A549 (cell line): ENCODE measurements at regions of chr22 and their contacts with region 1.

Region 1: DNA sequence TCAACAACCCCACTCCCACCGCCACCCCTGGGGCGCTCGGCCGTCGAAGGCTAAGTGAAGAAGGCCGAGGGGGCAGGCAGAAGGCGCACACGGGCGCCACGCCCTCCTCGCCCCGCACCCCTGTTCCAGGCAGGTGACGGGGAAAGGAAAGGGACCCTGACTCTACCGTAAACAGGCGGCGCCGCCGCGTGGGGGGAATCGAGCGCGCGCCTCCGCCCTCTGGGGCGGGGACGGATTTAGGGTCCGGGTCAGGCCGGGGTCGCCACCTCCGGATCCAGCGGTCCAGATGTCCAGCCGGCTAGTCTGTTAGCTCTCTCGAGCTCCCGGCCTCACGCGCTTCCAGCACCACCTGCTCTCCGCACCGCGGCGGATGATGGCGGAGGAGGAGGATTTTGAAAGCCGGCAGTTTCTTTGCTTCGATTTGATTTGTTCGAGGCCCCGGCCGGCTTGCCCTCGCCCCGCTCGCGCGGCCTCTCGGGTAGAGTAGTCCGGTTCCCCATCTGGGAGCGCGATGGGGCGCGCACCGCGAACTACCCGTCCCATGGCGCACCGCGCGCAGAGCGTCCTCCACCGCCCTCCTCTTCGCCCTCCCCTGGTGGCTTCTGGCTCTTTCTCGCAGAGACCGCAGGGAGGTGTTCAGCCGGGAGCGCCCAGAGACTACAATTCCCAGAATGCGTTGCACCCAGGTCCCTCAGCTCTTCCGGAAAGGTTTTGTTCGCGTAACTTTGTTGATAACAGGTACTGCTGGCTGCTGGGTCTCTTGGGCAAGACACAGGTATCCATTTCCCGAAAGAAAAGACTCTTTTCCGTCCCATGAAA is at the start of gene RANGAP1:
- DNase-seq: peak; percentile 92 to 96
- ATAC-seq: peak; percentile 95 to 97
- H3K4me3 ChIP-seq: peak within 1 kb of the TSS; percentile 97
- H3K27ac ChIP-seq: peak within 1 kb of the TSS; percentile 93 to 96
- H3K4me1 ChIP-seq: peaks cover 52% of the 10 kb centered on the region
- CTCF ChIP-seq: no peak
- EP300 ChIP-seq: no peak
- POLR2A ChIP-seq: peak; percentile 72
- RAD21 ChIP-seq: 0 out of 5 replicates have a peak, but pooled peaks of 1 of the 2 experiments have one; percentile 14
- polyA plus RNA-seq, gene RANGAP1: 43.0 and 44.9 TPM in 2 replicates

Region 2: DNA sequence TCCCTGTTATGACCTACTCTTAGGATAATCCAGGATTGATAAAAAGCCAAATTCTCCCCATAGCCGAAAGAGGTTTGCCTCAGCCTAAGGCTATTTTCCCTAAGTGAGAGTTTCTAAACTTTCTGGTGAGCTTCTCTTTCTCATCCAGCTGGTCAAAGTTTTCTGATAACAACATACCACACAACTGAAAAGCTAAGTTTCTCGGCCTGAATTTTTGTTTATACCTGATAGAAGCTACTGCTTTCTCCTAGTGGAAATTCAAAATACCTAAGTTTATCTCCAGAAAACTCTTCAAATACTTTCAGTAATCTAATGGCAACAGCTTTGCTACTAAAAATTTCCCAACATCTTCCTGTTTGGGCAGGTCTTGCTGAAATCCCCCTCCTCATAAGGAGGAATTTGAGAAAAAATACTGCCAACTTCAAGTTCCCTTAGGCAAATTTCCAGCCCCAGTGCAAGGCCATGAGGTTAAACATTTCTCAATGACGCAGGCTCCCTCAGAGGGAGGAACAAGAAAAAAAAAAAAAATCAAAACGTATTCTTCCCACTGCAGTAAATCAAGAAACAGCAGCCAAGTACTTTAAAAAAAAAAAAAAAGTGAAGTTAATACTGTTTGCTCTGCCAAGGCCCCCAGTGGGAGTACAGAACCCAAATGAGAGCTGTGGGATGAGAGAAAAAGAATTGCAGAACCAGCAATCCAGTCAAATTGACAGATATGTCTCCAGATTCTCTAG is 776.5 kb before region 1 on chr22:
- CTCF ChIA-PET with region 1: no interaction called
- POLR2A ChIA-PET with region 1: no interaction called
- DNase-seq: peak in 1 of 2 experiments; percentile 94
- ATAC-seq: peak; percentile 41 to 61; a peak in 5 of 6 replicates
- H3K4me3 ChIP-seq: no peak overlapping the region; the same call in 2 of the 3 replicates
- H3K27ac ChIP-seq: peak overlapping the region; percentile 94 to 99
- H3K4me1 ChIP-seq: peaks cover 92% of the 10 kb centered on the region
- CTCF ChIP-seq: no peak
- EP300 ChIP-seq: peak; percentile 91 to 96; a peak in 4 of 5 replicates
- POLR2A ChIP-seq: no peak
- RAD21 ChIP-seq: peak; percentile 2 to 6; a peak in 3 of 5 replicates

Region 3: DNA sequence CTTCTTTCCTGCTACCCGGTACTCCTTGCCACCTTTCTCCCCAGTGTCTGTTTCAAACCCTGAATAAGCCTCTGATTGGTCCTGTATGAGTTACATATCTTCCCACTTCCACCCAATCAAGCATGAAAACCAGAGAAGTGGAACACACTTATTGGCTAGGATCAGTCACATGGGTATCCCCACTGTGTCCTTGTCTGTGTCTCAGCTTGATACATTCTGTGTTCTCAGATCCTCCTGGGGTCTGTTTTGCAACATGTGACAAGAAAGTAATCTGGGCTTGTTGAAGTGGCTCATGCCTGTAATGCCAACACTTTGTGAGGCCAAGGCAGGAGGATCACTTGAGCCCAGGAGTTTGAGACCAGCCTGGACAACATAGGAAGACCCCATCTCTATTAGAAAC is 582.9 kb before region 1 on chr22:
- CTCF ChIA-PET with region 1: no interaction called
- POLR2A ChIA-PET with region 1: no interaction called
- DNase-seq: no peak
- ATAC-seq: peak in 1 of 2 experiments; percentile 40; a peak in 2 of 6 replicates
- H3K4me3 ChIP-seq: no peak overlapping the region
- H3K27ac ChIP-seq: no peak overlapping the region
- H3K4me1 ChIP-seq: no peaks in the 10 kb centered on the region
- CTCF ChIP-seq: no peak
- EP300 ChIP-seq: no peak
- POLR2A ChIP-seq: no peak
- RAD21 ChIP-seq: no peak

Region 4: GRCh38 chr22:41301105-41302020 is 15.3 kb after region 1 on chr22 and contains the start of gene ZC3H7B:
- CTCF ChIA-PET with region 1: interaction called, 7 read pairs
- POLR2A ChIA-PET with region 1: interaction called, 11 read pairs
- DNase-seq: peak; percentile 69 to 92
- ATAC-seq: peak; percentile 98 to 99
- H3K4me3 ChIP-seq: peak within 1 kb of the TSS; percentile 98
- H3K27ac ChIP-seq: peak within 1 kb of the TSS; percentile 98
- H3K4me1 ChIP-seq: peaks cover 20% of the 10 kb centered on the region
- CTCF ChIP-seq: peak; percentile 32; the same call in 2 of the 3 replicates
- EP300 ChIP-seq: no peak
- POLR2A ChIP-seq: peak; percentile 54
- RAD21 ChIP-seq: peak; percentile 39 to 54; a peak in 4 of 5 replicates
- polyA plus RNA-seq, gene ZC3H7B: 12.4 and 13.5 TPM in 2 replicates